ENCODE measurements at regions of chr4 and their contacts with region 1.

Region 1: GRCh38 chr4:6783053-6783981 is 790 bp downstream of the KIAA0232 start:
- DNase-seq: peak; percentile 88
- ATAC-seq: peak; percentile 67
- H3K4me3 Mint-ChIP-seq: peak overlapping the region; percentile 84
- H3K27ac Mint-ChIP-seq: peak overlapping the region; percentile 78
- H3K4me1 Mint-ChIP-seq: peaks cover 22% of the 10 kb centered on the region
- H3K27me3 Mint-ChIP-seq: no peaks in the 10 kb centered on the region
- CTCF ChIP-seq: no peak

Region 2: DNA sequence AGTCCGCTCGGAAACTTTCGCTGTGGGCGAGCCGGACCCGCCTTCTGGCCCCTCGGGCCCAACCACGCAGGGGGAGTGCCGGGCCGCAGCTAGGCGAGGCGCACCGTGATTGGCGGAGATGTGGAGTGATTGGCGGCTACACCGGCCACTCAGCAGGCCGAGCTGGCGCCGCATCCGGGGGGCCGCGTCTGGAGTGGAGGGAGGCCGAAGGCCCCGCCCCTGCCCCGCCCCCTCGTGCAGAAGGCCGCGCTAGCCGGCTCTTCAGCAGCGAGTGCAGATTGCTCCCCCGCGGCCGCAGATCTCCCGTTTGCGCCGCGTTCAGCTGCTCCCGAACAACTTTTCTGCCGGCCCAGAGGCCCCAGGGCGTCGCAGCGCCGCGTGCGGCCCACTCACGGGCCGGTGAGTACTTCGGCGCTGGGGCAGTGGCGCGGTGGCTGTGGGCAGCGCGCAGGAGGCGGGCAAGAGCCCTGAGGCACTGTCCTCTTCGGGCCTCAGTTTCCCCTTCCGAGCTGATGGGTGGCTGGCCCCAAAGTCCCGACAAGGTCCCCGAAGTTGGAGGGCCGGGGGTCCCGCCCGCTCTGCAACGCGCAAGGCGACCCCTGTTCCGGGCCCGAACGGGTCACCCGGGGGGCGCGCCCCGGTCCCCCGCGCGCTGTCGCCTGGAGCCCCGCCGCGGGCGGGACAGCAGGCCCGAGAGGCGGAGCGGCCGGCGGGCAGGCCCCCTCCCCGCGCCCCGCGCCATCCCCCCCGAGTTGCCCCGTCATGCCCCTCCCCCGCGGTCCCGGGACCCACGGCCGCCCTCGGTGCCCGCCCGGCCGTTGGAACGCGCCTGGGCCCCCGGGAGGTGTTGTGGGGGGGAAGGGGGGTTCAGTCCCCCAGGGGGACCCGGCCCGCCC is 513.5 kb before region 1 on chr4 and contains the start of gene WFS1:
- CTCF ChIA-PET with region 1: no interaction called
- POLR2A ChIA-PET with region 1: no interaction called
- intact Hi-C with region 1: loop called (anchors 5 kb)
- DNase-seq: peak; percentile 97
- ATAC-seq: peak; percentile 99
- H3K4me3 Mint-ChIP-seq: peak within 1 kb of the TSS; percentile 86
- H3K27ac Mint-ChIP-seq: peak within 1 kb of the TSS; percentile 63
- H3K4me1 Mint-ChIP-seq: peaks cover 29% of the 10 kb centered on the region
- H3K27me3 Mint-ChIP-seq: no peaks in the 10 kb centered on the region
- CTCF ChIP-seq: no peak
- total RNA-seq, gene WFS1: 2.4 and 4.3 TPM in 2 replicates

Region 3: GRCh38 chr4:6673660-6674499 is 109.4 kb before region 1 on chr4:
- CTCF ChIA-PET with region 1: interaction called, 3 read pairs
- POLR2A ChIA-PET with region 1: interaction called, 6 read pairs
- intact Hi-C with region 1: loop called (anchors 1 kb)
- DNase-seq: peak; percentile 93
- ATAC-seq: peak; percentile 88
- H3K4me3 Mint-ChIP-seq: peak overlapping the region; percentile 91
- H3K27ac Mint-ChIP-seq: peak overlapping the region; percentile 96
- H3K4me1 Mint-ChIP-seq: peaks cover 55% of the 10 kb centered on the region
- H3K27me3 Mint-ChIP-seq: no peaks in the 10 kb centered on the region
- CTCF ChIP-seq: no peak

Region 4: GRCh38 chr4:6815029-6815836 is 31.9 kb after region 1 on chr4:
- CTCF ChIA-PET with region 1: no interaction called
- POLR2A ChIA-PET with region 1: no interaction called
- intact Hi-C with region 1: loop called (anchors 5 kb)
- DNase-seq: no peak
- ATAC-seq: no peak
- H3K4me3 Mint-ChIP-seq: no peak overlapping the region
- H3K27ac Mint-ChIP-seq: no peak overlapping the region
- H3K4me1 Mint-ChIP-seq: peaks cover 28% of the 10 kb centered on the region
- H3K27me3 Mint-ChIP-seq: no peaks in the 10 kb centered on the region
- CTCF ChIP-seq: no peak

Region 5: DNA sequence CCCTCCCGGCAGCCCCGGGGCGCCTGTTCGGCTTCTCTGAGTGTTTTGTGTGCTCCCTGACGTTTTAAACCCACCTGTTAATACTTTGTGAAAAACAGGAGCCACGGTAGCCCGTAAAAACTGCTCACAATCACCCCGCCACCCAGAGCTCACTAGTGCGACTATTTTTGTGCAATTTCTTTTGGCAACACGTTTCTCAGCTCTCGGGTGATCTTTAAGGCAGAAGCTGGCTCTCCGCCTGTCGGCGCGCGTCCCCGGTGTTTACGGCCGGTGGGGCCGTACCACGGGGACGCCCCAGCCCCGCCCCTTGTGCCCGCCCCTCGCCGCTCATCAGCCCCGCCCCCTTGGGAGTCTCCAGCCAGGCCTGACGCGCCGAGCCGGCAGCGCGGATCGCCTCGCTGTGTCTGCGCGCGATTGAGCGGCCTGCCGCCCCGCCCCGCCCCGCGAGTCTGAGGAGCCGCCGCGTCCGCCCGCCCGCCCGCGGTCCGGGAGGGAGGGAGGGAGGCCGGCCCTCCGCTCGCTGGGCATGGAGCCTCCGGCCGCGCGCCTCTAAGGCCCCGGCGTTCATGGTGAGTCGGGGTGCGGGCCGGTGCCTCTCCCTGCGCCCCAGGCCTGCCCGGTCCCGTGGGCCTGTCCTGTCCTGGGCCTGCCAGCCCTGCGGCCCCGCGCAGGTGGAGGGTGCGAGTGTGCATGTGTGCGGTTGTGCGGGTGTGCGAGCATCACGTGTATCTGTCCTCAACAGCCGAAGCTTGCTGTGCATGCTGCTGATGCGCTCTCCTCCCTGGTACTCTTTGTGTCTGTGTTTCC is 203.7 kb after region 1 on chr4:
- CTCF ChIA-PET with region 1: no interaction called
- POLR2A ChIA-PET with region 1: interaction called, 8 read pairs
- intact Hi-C with region 1: loop called (anchors 1 kb)
- DNase-seq: peak; percentile 90
- ATAC-seq: peak; percentile 92
- H3K4me3 Mint-ChIP-seq: peak overlapping the region; percentile 94
- H3K27ac Mint-ChIP-seq: peak overlapping the region; percentile 98
- H3K4me1 Mint-ChIP-seq: peaks cover 74% of the 10 kb centered on the region
- H3K27me3 Mint-ChIP-seq: no peaks in the 10 kb centered on the region
- CTCF ChIP-seq: no peak

Region 6: DNA sequence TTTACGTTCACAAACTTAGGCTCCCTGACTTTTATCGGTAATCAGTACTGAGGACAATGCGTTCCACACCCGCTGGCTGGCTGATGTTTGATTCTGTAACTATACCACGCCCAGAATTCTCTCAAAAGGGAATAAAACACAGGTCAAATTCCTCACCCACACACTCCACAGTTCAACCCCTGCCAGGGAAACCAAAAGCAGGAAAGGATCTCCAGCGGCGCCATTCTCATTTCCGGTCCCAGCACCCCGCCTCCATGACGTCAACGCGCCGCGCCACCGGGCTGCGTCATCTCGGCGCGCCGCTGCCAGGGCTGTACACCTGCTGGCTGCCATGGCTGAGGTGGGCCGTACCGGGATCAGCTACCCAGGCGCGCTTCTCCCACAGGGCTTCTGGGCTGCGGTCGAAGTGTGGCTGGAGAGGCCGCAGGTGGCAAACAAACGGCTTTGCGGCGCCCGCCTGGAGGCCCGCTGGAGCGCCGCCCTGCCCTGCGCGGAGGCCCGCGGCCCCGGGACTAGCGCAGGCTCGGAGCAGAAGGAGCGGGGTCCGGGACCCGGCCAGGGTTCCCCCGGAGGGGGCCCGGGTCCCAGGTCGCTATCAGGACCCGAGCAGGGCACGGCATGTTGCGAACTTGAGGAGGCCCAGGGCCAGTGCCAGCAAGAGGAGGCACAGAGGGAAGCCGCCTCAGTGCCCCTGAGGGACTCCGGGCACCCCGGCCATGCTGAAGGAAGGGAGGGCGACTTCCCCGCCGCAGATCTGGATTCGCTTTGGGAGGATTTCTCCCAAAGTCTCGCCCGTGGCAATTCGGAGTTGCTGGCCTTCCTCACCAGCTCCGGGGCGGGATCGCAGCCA is 1657.4 kb after region 1 on chr4 and contains the starts of genes ACOX3 and TRMT44:
- CTCF ChIA-PET with region 1: no interaction called
- POLR2A ChIA-PET with region 1: no interaction called
- intact Hi-C with region 1: loop called (anchors 5 kb)
- DNase-seq: peak; percentile 100
- ATAC-seq: peak; percentile 85
- H3K4me3 Mint-ChIP-seq: peak within 1 kb of the TSS; percentile 97
- H3K27ac Mint-ChIP-seq: peak within 1 kb of the TSS; percentile 98
- H3K4me1 Mint-ChIP-seq: peaks cover 60% of the 10 kb centered on the region
- H3K27me3 Mint-ChIP-seq: no peaks in the 10 kb centered on the region
- CTCF ChIP-seq: no peak
- total RNA-seq, gene ACOX3: 17.1 and 20.6 TPM in 2 replicates
- total RNA-seq, gene TRMT44: 29.3 and 33.8 TPM in 2 replicates